T-cell (primary cell): ENCODE measurements at regions of chr15 and their contacts with region 1.

Region 1: DNA sequence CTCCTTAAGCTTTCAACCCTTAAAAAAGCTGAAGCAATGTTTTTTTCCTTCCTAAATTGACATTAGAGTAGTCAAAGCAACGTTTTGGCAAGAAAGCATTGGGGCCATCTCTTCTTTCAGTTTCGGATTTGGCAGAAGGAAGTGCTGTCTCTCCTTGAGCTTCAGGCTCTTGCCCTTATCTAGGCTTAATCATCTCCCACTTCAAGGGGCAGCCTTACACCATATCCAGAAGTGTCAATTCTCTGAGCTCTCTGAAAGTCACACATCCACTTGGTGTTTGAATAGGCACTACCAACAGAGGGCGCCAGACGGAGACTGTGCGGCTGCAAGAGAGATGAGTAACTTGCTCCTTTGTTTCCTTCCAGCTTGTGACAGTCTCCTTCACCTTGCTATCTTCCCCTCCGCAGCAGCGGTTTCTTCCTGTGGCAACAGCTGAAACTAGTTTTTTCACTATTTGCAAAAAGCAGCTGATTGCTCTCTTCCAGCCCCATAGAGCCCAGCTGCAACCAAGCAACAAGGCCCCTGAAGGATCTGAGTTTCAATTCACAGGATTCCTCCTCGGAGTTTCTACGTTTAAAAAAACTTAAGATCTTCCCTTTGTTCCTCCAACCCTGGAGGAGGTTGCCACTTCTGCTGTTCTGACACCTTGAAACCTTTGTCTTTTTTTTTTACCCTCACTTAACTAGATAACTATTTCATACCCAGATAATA is 147.0 kb upstream of the SLCO3A1 start:
- DNase-seq: peak; percentile 54 to 89 (median 78)
- ATAC-seq: peak; percentile 90 to 100 (median 92)
- H3K4me3 ChIP-seq: no peak overlapping the region
- H3K4me3 Mint-ChIP-seq: peak overlapping the region; percentile 21 to 50 (median 45)
- H3K27ac ChIP-seq: peak overlapping the region; percentile 56
- H3K27ac Mint-ChIP-seq: peak overlapping the region; percentile 85 to 88
- H3K4me1 ChIP-seq: peaks cover 8 to 12% of the 10 kb centered on the region in 2 experiments
- H3K4me1 Mint-ChIP-seq: peaks cover 14 to 24% (median 19%) of the 10 kb centered on the region in 3 donors
- H3K27me3 ChIP-seq: no peaks in the 10 kb centered on the region
- H3K27me3 Mint-ChIP-seq: peaks cover 1 to 5% of the 10 kb centered on the region in 2 donors

Region 2: DNA sequence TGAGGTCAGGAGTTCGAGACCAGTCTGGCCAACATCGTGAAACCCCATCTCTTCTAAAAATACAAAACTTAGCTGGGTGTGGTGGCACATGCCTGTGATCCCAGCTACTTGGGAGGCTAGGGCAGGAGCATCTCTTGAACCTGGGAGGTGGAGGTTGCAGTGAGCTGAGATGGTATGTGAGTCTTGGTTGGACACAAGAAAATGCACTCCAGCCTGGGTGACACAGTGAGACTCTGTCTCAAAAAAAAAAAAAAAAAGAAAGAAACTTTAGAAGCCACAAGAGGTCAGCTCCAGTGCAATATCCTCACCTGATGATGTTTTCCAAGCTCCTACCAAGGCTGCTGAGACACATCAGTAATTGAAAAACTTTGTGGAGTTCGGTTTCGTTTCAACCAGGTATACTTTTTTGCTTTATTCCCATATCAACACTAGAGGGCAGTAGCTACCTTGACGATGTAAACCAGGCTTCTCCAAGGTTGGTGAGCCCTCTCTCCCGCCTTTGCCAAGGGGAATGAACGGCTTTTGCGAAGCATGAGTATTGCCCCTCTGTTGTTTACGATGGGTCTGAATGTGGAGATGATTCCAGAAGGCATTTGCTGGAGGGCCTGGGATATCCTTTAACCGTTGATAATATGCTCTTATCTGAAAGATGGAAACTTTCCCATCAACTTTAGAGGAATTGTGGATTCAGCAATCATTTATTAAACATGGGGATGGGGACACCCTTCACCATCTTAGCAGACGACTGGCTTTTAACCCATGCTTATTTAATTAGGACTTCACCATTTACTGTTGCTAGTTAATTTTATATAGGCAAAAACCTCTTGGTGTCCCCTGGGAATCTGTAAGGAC is 403.7 kb before region 1 on chr15:
- CTCF ChIA-PET with region 1: interaction called in 1 of 2 experiments, 16 read pairs
- POLR2A ChIA-PET with region 1: no interaction called
- DNase-seq: peak in 11 of 35 experiments; percentile 13 to 75 (median 26)
- ATAC-seq: peak; percentile 37 to 54 (median 50)
- H3K4me3 ChIP-seq: no peak overlapping the region
- H3K4me3 Mint-ChIP-seq: peak overlapping the region in 1 of 3 donors; percentile 27
- H3K27ac ChIP-seq: no peak overlapping the region
- H3K27ac Mint-ChIP-seq: no peak overlapping the region
- H3K4me1 ChIP-seq: peaks cover 19 to 24% of the 10 kb centered on the region in 2 experiments
- H3K4me1 Mint-ChIP-seq: peaks cover 35 to 51% (median 49%) of the 10 kb centered on the region in 3 donors
- H3K27me3 ChIP-seq: peaks cover 0 to 7% of the 10 kb centered on the region in 2 experiments
- H3K27me3 Mint-ChIP-seq: peaks cover 11 to 15% of the 10 kb centered on the region in 2 donors

Region 3: DNA sequence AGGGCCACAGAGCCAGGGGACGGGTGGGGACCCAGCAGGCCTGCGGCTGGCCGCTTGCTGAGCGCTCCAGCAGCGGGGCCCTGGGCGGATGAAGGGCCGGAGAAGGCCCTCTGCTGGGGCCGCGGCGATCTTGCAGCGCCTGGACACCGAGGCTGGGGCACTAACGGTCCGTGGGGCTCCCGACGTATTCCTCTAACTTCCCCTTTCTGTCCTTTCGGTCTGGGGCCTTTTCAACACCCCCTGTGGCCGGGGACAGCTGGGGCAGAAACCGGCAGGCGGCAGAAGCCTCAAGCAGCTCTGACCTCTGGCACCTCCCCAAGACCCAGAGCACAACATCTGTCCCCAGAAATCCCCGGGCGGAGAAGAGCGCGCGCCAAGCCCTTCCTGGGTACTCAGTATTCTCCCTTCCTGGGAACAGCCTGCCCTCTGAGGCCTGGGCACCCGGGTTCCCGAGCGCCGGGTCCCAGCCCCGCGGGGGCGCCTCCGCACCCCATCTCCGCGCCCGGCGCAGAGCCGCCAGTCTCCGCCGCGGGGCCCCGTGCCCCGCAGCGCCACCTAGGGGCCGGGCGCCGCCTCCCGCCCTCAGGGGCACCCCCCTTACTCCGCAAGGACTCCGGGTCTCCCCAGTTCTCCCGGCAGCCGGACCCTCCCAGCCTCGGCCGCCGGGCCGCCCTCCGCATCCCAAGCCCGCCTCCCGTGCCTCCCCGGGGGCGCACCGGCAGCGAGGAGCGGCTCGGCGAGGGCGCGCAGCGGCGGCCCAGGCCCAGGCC is 146.4 kb after region 1 on chr15:
- CTCF ChIA-PET with region 1: interaction called in 1 of 2 experiments, 11 read pairs
- POLR2A ChIA-PET with region 1: no interaction called
- DNase-seq: peak; percentile 39 to 87 (median 67)
- ATAC-seq: peak; percentile 67 to 73 (median 69)
- H3K4me3 ChIP-seq: peak overlapping the region; percentile 77 to 80
- H3K4me3 Mint-ChIP-seq: peak overlapping the region; percentile 77 to 86 (median 84)
- H3K27ac ChIP-seq: peak overlapping the region; percentile 83
- H3K27ac Mint-ChIP-seq: peak overlapping the region; percentile 84 to 90
- H3K4me1 ChIP-seq: peaks cover 40 to 55% of the 10 kb centered on the region in 2 experiments
- H3K4me1 Mint-ChIP-seq: peaks cover 58 to 70% (median 63%) of the 10 kb centered on the region in 3 donors
- H3K27me3 ChIP-seq: no peaks in the 10 kb centered on the region
- H3K27me3 Mint-ChIP-seq: no peaks in the 10 kb centered on the region

Region 4: DNA sequence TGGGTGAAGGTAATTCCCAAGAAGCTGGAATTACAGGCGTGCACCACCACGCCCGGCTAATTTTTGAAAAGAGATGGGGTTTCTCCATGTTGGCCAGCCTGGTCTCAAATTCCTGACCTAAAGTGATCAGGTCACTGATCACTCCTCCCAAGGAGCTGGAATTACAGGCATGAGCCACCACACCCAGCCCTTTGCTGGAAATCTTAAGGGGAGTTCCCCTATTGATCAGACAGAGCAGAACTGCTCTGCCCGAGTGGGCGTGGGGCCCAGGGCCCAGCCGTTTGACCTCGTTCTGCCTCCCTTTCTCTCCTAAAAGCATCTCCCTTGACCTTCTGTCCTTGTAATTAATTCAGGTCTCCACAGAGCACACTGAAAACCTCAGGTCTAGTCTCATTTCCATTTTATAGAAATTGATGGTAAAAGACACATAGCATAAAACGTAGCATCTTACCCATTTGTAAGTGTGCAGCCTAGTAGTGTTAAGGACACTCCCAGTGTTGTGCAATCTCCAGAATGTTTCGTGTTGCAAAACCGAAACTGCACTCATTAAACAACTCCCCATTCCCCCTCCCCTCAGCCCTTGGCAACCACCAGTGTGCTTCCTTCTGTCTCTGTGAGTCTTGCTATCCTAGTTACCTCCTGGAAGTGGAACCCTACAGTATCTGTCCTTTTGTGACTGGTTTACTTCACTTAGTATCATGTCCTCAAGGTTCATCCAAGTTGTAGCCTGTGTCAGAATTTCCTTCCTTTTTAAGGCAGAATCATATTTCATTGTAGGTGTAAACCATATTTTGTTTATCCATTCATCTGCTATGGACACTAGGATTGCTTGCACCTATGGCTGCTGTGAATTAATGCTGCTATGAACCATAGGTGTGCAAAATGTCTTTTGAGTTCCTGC is 236.4 kb after region 1 on chr15:
- CTCF ChIA-PET with region 1: interaction called, 6 to 22 read pairs
- POLR2A ChIA-PET with region 1: no interaction called
- DNase-seq: peak in 30 of 35 experiments; percentile 6 to 63 (median 38)
- ATAC-seq: peak; percentile 65 to 95 (median 88)
- H3K4me3 ChIP-seq: peak overlapping the region in 1 of 2 donors; percentile 4
- H3K4me3 Mint-ChIP-seq: peak overlapping the region in 2 of 3 donors; percentile 59 to 65
- H3K27ac ChIP-seq: peak overlapping the region; percentile 28
- H3K27ac Mint-ChIP-seq: peak overlapping the region; percentile 74 to 88
- H3K4me1 ChIP-seq: peaks cover 0 to 38% of the 10 kb centered on the region in 2 experiments
- H3K4me1 Mint-ChIP-seq: peaks cover 72 to 85% (median 76%) of the 10 kb centered on the region in 3 donors
- H3K27me3 ChIP-seq: no peaks in the 10 kb centered on the region
- H3K27me3 Mint-ChIP-seq: peaks cover 0 to 4% of the 10 kb centered on the region in 2 donors

Region 5: DNA sequence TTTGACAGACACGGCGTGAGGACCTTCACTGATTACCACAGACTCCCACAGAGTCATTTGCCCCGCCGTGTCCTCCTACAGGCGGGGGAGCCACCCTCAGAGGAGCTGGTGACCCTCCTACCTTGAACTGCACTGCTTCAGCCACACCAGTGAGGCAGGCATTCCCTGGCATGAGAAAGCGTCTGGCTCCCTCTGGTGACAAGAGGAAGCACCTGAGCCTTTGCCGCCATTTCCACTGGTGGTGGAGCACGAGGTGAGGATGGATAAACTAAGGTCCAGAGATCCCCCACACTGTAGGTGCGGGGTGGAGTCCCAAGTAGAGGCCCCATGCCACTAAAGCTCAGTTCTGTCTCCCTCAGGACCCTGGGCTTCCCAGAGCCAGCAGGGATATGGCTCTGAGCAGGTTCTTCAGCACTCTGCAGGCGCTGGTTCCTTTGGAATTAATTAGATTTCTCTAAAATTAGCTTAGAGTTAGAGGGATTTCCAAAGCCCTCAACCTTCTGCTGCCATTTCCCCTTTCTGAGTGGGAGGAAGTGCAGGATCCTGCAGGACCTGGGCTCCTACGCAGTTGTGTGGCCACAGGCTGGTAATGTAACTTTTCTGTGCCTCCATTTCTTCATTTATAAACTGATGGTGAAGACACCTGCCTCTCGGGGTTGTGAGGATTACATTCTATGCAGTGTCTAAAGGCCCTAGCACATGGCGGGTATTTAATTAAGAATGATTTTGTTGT is 371.0 kb after region 1 on chr15:
- CTCF ChIA-PET with region 1: interaction called, 7 to 11 read pairs
- POLR2A ChIA-PET with region 1: no interaction called
- DNase-seq: peak in 34 of 35 experiments; percentile 4 to 69 (median 41)
- ATAC-seq: peak; percentile 39 to 72 (median 69)
- H3K4me3 ChIP-seq: no peak overlapping the region
- H3K4me3 Mint-ChIP-seq: no peak overlapping the region
- H3K27ac ChIP-seq: no peak overlapping the region
- H3K27ac Mint-ChIP-seq: no peak overlapping the region
- H3K4me1 ChIP-seq: peaks cover 2 to 28% of the 10 kb centered on the region in 2 experiments
- H3K4me1 Mint-ChIP-seq: peaks cover 30 to 48% (median 39%) of the 10 kb centered on the region in 3 donors
- H3K27me3 ChIP-seq: no peaks in the 10 kb centered on the region
- H3K27me3 Mint-ChIP-seq: no peaks in the 10 kb centered on the region